ENCODE measurements at regions of chr1 and their contacts with region 1.

Region 1: GRCh38 chr1:57544345-57544744 is 120.5 kb upstream of the DAB1 start:
- DNase-seq: no peak
- H3K4me3 ChIP-seq: no peak overlapping the region
- H3K27ac ChIP-seq: no peak overlapping the region
- H3K4me1 ChIP-seq: peaks cover 16% of the 10 kb centered on the region
- H3K27me3 ChIP-seq: no peaks in the 10 kb centered on the region
- CTCF ChIP-seq: no peak

Region 2: GRCh38 chr1:57033222-57034001 is 510.9 kb before region 1 on chr1:
- CTCF ChIA-PET with region 1: no interaction called
- POLR2A ChIA-PET with region 1: no interaction called
- intact Hi-C with region 1: no loop called
- DNase-seq: no peak
- H3K4me3 ChIP-seq: no peak overlapping the region
- H3K27ac ChIP-seq: no peak overlapping the region
- H3K4me1 ChIP-seq: no peaks in the 10 kb centered on the region
- H3K27me3 ChIP-seq: no peaks in the 10 kb centered on the region
- CTCF ChIP-seq: no peak

Region 3: GRCh38 chr1:57165551-57165950 is 378.8 kb before region 1 on chr1:
- CTCF ChIA-PET with region 1: no interaction called
- POLR2A ChIA-PET with region 1: no interaction called
- intact Hi-C with region 1: loop called (anchors 5 kb)
- DNase-seq: no peak
- H3K4me3 ChIP-seq: no peak overlapping the region
- H3K27ac ChIP-seq: no peak overlapping the region
- H3K4me1 ChIP-seq: peaks cover 6% of the 10 kb centered on the region
- H3K27me3 ChIP-seq: no peaks in the 10 kb centered on the region
- CTCF ChIP-seq: no peak

Region 4: DNA sequence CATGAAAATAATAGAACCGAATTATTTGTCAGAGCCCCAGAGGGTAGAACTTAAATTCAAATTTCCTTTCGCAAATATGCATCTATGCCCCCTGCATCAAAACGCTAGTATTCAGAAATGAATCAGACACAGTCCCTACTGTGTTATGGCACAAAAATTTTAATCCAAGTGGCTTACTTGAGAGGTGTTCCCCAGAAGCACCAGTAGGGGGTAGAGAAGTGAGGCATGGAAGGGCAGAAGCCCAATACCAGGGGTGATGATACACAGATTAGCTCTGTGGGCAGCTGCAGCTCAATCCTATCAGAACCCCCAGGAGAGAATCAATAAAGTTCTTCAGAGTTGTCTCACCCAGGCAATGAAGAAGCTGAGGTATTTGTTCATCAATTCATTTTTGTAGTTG is 659.9 kb after region 1 on chr1:
- CTCF ChIA-PET with region 1: no interaction called
- POLR2A ChIA-PET with region 1: no interaction called
- intact Hi-C with region 1: no loop called
- DNase-seq: peak; percentile 43
- H3K4me3 ChIP-seq: no peak overlapping the region
- H3K27ac ChIP-seq: no peak overlapping the region
- H3K4me1 ChIP-seq: no peaks in the 10 kb centered on the region
- H3K27me3 ChIP-seq: no peaks in the 10 kb centered on the region
- CTCF ChIP-seq: peak; percentile 53